MCF 10A (cell line): ENCODE measurements at regions of chr20 and their contacts with region 1.

Region 1: GRCh38 chr20:63864847-63865640 is at the start of gene TPD52L2:
- DNase-seq: peak; percentile 99
- H3K4me3 Mint-ChIP-seq: peak within 1 kb of the TSS; percentile 98
- H3K27ac Mint-ChIP-seq: peak within 1 kb of the TSS; percentile 96
- H3K4me1 Mint-ChIP-seq: peaks cover 9% of the 10 kb centered on the region
- H3K27me3 Mint-ChIP-seq: no peaks in the 10 kb centered on the region
- CTCF ChIP-seq: no peak
- total RNA-seq, gene TPD52L2: 174 and 175 TPM in 2 replicates

Region 2: GRCh38 chr20:63230800-63231268 is 634.2 kb before region 1 on chr20:
- CTCF ChIA-PET with region 1: no interaction called
- POLR2A ChIA-PET with region 1: no interaction called
- intact Hi-C with region 1: no loop called
- DNase-seq: peak; percentile 58
- H3K4me3 Mint-ChIP-seq: no peak overlapping the region
- H3K27ac Mint-ChIP-seq: no peak overlapping the region
- H3K4me1 Mint-ChIP-seq: no peaks in the 10 kb centered on the region
- H3K27me3 Mint-ChIP-seq: peaks cover 44% of the 10 kb centered on the region
- CTCF ChIP-seq: peak; percentile 31

Region 3: GRCh38 chr20:63537525-63538203 is 327.4 kb before region 1 on chr20:
- CTCF ChIA-PET with region 1: interaction called, 5 read pairs
- POLR2A ChIA-PET with region 1: interaction called, 39 read pairs
- intact Hi-C with region 1: loop called (anchors 2 kb)
- DNase-seq: peak; percentile 99
- H3K4me3 Mint-ChIP-seq: peak overlapping the region; percentile 73
- H3K27ac Mint-ChIP-seq: peak overlapping the region; percentile 92
- H3K4me1 Mint-ChIP-seq: peaks cover 14% of the 10 kb centered on the region
- H3K27me3 Mint-ChIP-seq: no peaks in the 10 kb centered on the region
- CTCF ChIP-seq: peak; percentile 95

Region 4: GRCh38 chr20:63657937-63658748 is 206.9 kb before region 1 on chr20 and contains the start of gene RTEL1:
- CTCF ChIA-PET with region 1: no interaction called
- POLR2A ChIA-PET with region 1: interaction called, 15 read pairs
- intact Hi-C with region 1: no loop called
- DNase-seq: peak; percentile 88
- H3K4me3 Mint-ChIP-seq: peak within 1 kb of the TSS; percentile 88
- H3K27ac Mint-ChIP-seq: peak within 1 kb of the TSS; percentile 97
- H3K4me1 Mint-ChIP-seq: peaks cover 9% of the 10 kb centered on the region
- H3K27me3 Mint-ChIP-seq: no peaks in the 10 kb centered on the region
- CTCF ChIP-seq: no peak
- total RNA-seq, gene RTEL1: 27.9 and 39.2 TPM in 2 replicates

Region 5: DNA sequence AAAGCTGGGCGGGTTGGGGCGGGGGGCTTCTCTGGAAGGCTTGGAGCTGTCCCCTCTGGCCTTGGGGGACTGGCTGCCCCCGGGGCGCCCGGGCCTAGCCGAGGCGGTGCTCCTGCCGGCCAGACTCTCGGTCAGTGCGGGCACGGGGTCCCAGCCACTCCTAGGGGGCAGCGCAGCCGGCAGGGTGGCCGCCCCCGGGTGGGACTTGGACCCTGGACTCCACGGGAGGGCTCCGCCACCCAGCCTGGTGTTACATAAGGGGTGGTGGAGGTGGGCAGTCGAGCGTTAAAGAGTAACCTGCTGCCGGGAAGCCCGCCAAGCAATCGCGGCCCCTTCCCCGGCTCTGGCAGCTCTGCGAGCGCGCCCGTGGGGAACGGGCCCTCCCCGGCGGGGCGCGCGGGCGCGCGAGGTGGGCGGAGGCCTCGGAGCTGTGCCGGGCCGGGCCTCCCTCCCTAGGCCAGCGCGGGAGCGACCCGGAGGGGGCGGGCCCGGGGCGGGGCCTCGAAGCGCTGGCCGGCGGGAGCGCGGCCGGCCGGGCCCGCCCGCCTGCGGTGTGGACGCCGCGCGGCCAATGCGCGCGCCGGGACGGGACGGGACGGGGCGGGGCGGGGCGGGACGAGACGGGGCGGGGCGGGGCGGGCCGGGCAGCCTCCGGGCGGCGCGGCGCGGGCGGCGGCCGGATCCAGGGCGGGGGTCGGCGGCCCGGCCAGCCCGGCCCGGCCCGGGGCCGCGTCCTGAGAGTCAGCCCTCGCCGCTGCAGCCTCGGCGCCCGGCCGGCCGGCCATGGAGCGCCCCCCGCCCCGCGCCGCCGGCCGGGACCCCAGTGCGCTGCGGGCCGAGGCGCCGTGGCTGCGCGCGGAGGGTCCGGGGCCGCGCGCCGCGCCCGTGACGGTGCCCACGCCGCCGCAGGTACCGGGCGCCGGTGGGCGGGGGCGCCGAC is 125.6 kb before region 1 on chr20 and contains the start of gene SLC2A4RG:
- CTCF ChIA-PET with region 1: interaction called, 4 read pairs
- POLR2A ChIA-PET with region 1: interaction called, 69 read pairs
- intact Hi-C with region 1: no loop called
- DNase-seq: peak; percentile 76
- H3K4me3 Mint-ChIP-seq: peak within 1 kb of the TSS; percentile 74
- H3K27ac Mint-ChIP-seq: no peak within 1 kb of the TSS
- H3K4me1 Mint-ChIP-seq: no peaks in the 10 kb centered on the region
- H3K27me3 Mint-ChIP-seq: no peaks in the 10 kb centered on the region
- CTCF ChIP-seq: no peak
- total RNA-seq, gene SLC2A4RG: 85.0 and 105 TPM in 2 replicates

Region 6: DNA sequence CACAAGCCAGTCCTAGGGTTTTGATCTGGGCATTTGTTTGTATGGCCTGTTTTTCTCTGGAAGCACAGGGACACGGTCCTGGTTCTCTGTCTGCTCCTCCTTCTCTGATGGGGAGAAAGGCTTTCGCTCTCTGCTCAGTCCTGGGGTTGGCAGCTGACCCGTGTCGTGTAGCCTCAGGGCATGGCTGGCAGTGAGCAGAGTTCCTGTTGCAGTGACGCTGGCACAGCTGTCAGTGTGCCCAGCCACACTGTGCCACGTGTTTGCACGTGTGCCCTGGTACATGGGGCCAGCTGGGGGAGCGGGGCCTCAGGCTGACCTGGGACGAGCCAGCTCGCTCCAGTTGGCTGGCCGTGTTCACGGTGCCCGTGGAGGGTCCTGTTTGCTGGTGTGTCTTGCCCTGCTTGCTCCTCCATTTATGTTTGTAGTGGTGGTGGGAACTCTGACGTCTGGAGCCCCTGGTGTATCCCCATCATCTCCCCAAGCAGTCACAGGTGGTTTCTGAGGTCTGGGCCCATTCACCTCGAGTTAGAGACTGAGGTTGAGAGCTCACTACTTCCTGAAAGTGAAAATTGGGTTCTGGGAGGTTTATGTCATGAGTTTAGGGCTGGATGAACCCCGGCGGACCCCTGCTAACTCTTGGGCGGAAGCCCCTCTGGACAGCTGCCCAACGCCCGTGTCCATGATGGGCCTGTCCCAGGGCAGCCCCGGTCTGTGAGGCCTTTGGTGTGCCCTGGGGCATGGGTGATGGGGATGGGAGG is 19.6 kb after region 1 on chr20:
- CTCF ChIA-PET with region 1: interaction called, 5 read pairs
- POLR2A ChIA-PET with region 1: interaction called, 42 read pairs
- intact Hi-C with region 1: no loop called
- DNase-seq: peak; percentile 57
- H3K4me3 Mint-ChIP-seq: peak overlapping the region; percentile 36
- H3K27ac Mint-ChIP-seq: peak overlapping the region; percentile 25
- H3K4me1 Mint-ChIP-seq: peaks cover 25% of the 10 kb centered on the region
- H3K27me3 Mint-ChIP-seq: no peaks in the 10 kb centered on the region
- CTCF ChIP-seq: no peak

Region 7: DNA sequence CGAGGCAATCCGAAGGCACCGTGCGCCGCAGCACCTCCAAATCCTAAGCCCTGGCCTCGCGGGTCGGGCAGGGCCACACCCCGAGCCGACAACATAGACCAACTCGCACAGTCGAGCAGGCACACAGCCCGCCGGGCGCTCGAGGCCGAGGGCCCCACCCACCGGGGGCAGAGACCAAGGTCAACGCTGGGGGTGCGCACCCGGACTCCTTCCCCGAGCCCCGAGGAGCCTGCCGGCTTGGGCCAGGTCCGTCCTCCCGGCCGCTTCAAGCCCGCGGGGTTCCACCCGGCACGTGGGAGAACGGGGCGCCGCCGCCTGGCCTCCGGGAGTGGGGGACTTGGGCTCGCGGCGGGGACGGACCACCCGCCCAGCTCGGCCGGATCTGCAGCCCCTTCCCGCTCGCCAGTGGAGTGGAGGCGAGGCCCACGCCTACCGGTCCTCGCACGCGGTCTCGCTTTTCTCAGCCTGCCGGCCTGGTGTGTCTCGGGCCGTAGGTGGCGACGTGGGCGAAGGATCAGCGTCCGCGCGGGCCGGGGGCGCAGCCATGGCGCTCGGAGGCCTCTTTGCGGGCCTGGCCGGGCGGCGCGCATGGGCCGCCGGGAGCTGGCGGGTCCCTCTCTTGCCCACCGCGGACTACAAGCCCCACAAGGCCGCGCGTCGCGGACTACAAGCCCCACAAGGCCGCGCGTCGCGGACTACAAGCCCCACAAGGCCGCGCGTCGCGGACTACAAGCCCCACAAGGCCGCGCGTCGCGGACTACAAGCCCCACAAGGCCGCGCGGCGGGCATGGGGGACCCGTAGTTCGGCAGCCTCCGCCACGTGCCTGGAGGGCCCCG is 91.0 kb after region 1 on chr20 and contains the start of gene UCKL1:
- CTCF ChIA-PET with region 1: interaction called, 5 read pairs
- POLR2A ChIA-PET with region 1: interaction called, 74 read pairs
- intact Hi-C with region 1: no loop called
- DNase-seq: peak; percentile 81
- H3K4me3 Mint-ChIP-seq: peak within 1 kb of the TSS; percentile 74
- H3K27ac Mint-ChIP-seq: no peak within 1 kb of the TSS
- H3K4me1 Mint-ChIP-seq: peaks cover 21% of the 10 kb centered on the region
- H3K27me3 Mint-ChIP-seq: no peaks in the 10 kb centered on the region
- CTCF ChIP-seq: no peak
- total RNA-seq, gene UCKL1: 38.6 and 43.7 TPM in 2 replicates

Region 8: GRCh38 chr20:64069614-64070243 is 204.7 kb after region 1 on chr20:
- CTCF ChIA-PET with region 1: no interaction called
- POLR2A ChIA-PET with region 1: no interaction called
- intact Hi-C with region 1: no loop called
- DNase-seq: peak; percentile 41
- H3K4me3 Mint-ChIP-seq: no peak overlapping the region
- H3K27ac Mint-ChIP-seq: no peak overlapping the region
- H3K4me1 Mint-ChIP-seq: peaks cover 23% of the 10 kb centered on the region
- H3K27me3 Mint-ChIP-seq: no peaks in the 10 kb centered on the region
- CTCF ChIP-seq: peak; percentile 81